HCT116 (cell line): ENCODE measurements at regions of chr17 and their contacts with region 1.

Region 1: GRCh38 chr17:50560185-50560824 is at the start of gene CACNA1G:
- DNase-seq: peak; percentile 80
- ATAC-seq: peak; percentile 93
- H3K4me3 ChIP-seq: peak within 1 kb of the TSS; percentile 54 to 68
- H3K27ac ChIP-seq: peak within 1 kb of the TSS; percentile 43; the same call in 1 of the 2 replicates
- H3K4me1 ChIP-seq: peaks cover 6 to 18% of the 10 kb centered on the region in 2 experiments; a peak in 3 of 4 replicates
- H3K27me3 ChIP-seq: no peaks in the 10 kb centered on the region
- CTCF ChIP-seq: no peak
- POLR2A ChIP-seq: peak; percentile 64
- RAD21 ChIP-seq: no peak
- total RNA-seq, gene CACNA1G: 3.4 TPM

Region 2: GRCh38 chr17:50618941-50619888 is 58.9 kb after region 1 on chr17:
- CTCF ChIA-PET with region 1: interaction called, 3 read pairs
- POLR2A ChIA-PET with region 1: no interaction called
- RAD21 ChIA-PET with region 1: interaction called in 1 of 2 experiments, 11 read pairs
- intact Hi-C with region 1: no loop called
- DNase-seq: no peak
- ATAC-seq: peak; percentile 24; the same call in 1 of the 2 replicates
- H3K4me3 ChIP-seq: no peak overlapping the region
- H3K27ac ChIP-seq: no peak overlapping the region; the same call in 1 of the 2 replicates
- H3K4me1 ChIP-seq: peaks cover 0 to 21% of the 10 kb centered on the region in 2 experiments; a peak in 2 of 4 replicates
- H3K27me3 ChIP-seq: no peaks in the 10 kb centered on the region
- CTCF ChIP-seq: no peak
- POLR2A ChIP-seq: no peak
- RAD21 ChIP-seq: no peak

Region 3: DNA sequence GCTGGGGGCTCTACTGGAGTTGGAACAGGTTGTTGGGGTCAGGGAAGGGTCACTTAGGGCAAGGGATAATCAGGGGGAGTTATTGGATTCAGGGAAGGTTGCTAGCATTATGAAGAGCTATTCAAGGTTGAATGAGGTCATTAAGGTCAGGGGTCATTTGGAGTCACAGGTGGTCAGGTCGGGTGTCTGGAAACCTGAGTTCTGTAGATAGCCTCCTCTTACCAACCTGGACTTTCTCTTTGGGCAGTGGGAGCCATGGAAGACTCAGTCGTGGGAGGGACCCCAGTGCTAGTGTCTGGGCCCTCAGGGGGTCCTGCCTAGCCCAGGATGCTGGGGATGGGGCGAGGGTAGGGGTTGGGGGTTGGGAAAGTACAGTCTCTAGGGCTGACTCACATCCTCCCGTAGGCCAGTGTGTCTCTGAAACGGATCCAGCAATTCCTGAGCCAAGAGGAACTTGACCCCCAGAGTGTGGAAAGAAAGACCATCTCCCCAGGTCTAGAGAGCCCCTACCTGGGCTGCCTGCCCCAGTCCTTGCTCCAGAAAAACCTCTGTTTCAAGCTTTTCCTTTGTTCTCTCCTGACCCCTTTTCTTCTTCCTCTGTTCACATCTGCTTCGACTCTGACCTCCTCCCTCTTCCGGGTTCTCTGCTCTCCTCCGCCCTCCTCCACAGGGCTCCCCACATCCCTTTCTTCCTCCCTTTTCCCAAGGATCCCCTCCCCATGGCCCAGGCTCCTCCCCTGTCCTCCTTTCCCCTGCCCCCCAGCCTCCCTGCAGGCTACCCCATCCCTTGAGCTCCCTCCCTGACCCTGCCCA is 107.9 kb after region 1 on chr17:
- CTCF ChIA-PET with region 1: no interaction called
- POLR2A ChIA-PET with region 1: no interaction called
- RAD21 ChIA-PET with region 1: no interaction called
- intact Hi-C with region 1: no loop called
- DNase-seq: no peak
- ATAC-seq: peak; percentile 40
- H3K4me3 ChIP-seq: peak overlapping the region in 1 of 2 experiments; percentile 28; a peak in 2 of 4 replicates
- H3K27ac ChIP-seq: no peak overlapping the region; the same call in 1 of the 2 replicates
- H3K4me1 ChIP-seq: peaks cover 28 to 69% of the 10 kb centered on the region in 2 experiments
- H3K27me3 ChIP-seq: no peaks in the 10 kb centered on the region
- CTCF ChIP-seq: no peak
- POLR2A ChIP-seq: peak; percentile 54
- RAD21 ChIP-seq: no peak